ENCODE measurements at regions of chr11 and their contacts with region 1.

Region 1: DNA sequence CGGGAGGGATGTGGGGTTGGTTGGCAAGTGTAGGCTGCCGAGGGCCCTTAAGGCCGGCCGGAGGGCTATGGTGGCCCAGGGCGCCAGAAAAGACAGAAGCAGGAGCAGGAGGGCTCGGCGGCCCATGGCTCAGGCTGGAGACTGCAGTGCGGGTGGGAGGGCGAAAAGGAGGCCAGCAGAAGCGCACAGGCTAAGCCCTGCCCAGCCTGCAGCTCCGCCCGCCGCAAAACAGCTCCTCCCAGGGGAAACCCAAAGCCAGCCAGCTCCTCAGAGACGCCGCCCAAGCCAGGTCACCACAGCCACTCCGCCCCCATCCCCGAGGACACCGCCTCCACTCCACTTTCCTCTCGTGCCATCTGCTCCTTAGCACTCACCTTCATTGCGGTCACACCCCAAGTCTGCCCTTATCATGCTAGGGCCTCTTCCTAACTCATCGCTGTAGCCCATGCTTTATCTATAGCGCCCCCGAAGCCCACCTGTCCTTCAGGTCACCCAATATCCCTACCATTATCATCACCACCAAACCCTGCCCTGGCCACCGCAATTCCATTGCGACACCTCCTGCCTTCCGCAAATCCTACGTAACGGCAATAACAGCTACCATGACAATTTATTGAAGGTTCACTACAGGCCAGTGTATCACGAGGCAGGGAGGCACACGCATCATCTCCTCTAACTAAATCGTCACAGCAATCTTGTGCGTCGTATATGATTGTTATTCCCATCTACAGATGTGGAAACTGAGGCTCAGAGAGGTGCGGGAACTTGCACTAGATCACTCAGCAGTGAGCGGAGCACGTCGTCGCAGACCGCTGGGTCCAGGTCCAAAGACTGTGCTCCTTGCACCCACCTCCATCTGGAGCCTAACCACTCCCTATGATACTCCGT is at the start of gene PRCP:
- DNase-seq: peak; percentile 87 to 99 (median 96)
- ATAC-seq: peak; percentile 96
- H3K4me3 ChIP-seq: peak within 1 kb of the TSS; percentile 61 to 68
- H3K27ac ChIP-seq: peak within 1 kb of the TSS; percentile 79 to 98
- H3K4me1 ChIP-seq: peaks cover 9 to 55% of the 10 kb centered on the region in 2 donors
- H3K27me3 ChIP-seq: no peaks in the 10 kb centered on the region
- CTCF ChIP-seq: no peak
- polyA plus RNA-seq, gene PRCP: 206 to 261 (median 231) TPM

Region 2: GRCh38 chr11:82837650-82838049 is 62.9 kb before region 1 on chr11:
- intact Hi-C with region 1: no loop called
- DNase-seq: no peak
- ATAC-seq: no peak
- H3K4me3 ChIP-seq: no peak overlapping the region
- H3K27ac ChIP-seq: no peak overlapping the region
- H3K4me1 ChIP-seq: no peaks in the 10 kb centered on the region
- H3K27me3 ChIP-seq: no peaks in the 10 kb centered on the region
- CTCF ChIP-seq: no peak

Region 3: DNA sequence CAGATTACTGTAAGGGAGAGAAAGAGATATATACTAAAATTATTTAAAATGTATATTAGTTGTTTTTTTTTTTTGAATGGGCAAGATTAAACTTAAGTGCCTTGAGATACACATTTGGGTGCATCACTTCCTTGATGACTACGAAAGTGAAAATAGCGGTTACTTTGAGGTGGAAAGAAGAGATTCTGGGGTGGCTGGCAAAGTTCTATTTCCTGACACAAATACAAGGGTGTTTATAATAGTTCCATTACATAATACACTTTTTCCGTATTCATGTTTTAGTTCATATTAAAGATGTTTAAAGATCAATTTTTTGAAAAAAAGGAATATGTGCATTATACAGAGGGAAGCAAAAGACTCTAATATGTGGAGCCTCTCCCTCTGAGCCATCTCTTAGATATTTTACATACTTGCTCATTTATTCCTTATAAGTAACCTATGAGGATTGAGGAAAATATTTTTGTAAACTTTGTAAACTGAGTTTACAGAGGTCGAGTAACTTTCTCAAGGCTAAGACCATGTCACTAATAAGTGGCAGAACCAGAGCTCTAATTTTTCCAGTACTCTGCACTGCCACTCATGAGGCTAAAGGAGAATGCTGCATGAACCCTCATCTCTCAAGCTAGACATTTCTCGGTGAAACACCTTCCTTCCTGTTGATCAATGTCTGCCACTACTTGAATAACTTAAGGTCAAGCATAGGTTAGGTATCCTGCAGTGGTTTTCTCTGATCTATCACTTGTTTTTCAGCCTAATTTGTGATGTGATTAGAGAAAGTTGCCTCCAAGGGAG is 59.7 kb after region 1 on chr11:
- intact Hi-C with region 1: no loop called
- DNase-seq: no peak
- ATAC-seq: peak; percentile 76
- H3K4me3 ChIP-seq: no peak overlapping the region
- H3K27ac ChIP-seq: no peak overlapping the region
- H3K4me1 ChIP-seq: peaks cover 0 to 3% of the 10 kb centered on the region in 2 donors
- H3K27me3 ChIP-seq: no peaks in the 10 kb centered on the region
- CTCF ChIP-seq: no peak

Region 4: GRCh38 chr11:83249972-83250593 is 349.6 kb after region 1 on chr11:
- intact Hi-C with region 1: loop called in 1 of 2 experiments (anchors 10 kb)
- DNase-seq: peak in 2 of 4 donors; percentile 19 to 40
- ATAC-seq: peak; percentile 83
- H3K4me3 ChIP-seq: no peak overlapping the region
- H3K27ac ChIP-seq: no peak overlapping the region
- H3K4me1 ChIP-seq: no peaks in the 10 kb centered on the region
- H3K27me3 ChIP-seq: no peaks in the 10 kb centered on the region
- CTCF ChIP-seq: peak; percentile 59 to 74